Activated CD4-positive, alpha-beta memory T cell treated with anti-CD3 and anti-CD28 coated beads, Interleukin-2, amount 10 ng/mL, durations not matched to agents 7 days and 5 days (primary cell): ENCODE measurements at regions of chr2 and their contacts with region 1.

Region 1: GRCh38 chr2:241762933-241763369 is 13.7 kb upstream of the GAL3ST2 start:
- DNase-seq: peak; percentile 87
- H3K4me3 Mint-ChIP-seq: peak overlapping the region; percentile 45
- H3K27ac Mint-ChIP-seq: peak overlapping the region; percentile 92
- H3K4me1 Mint-ChIP-seq: peaks cover 53% of the 10 kb centered on the region
- H3K27me3 Mint-ChIP-seq: no peaks in the 10 kb centered on the region

Region 2: GRCh38 chr2:241577413-241578122 is 185.4 kb before region 1 on chr2:
- CTCF ChIA-PET with region 1: no interaction called
- POLR2A ChIA-PET with region 1: no interaction called
- DNase-seq: no peak
- H3K4me3 Mint-ChIP-seq: no peak overlapping the region
- H3K27ac Mint-ChIP-seq: no peak overlapping the region
- H3K4me1 Mint-ChIP-seq: no peaks in the 10 kb centered on the region
- H3K27me3 Mint-ChIP-seq: no peaks in the 10 kb centered on the region

Region 3: DNA sequence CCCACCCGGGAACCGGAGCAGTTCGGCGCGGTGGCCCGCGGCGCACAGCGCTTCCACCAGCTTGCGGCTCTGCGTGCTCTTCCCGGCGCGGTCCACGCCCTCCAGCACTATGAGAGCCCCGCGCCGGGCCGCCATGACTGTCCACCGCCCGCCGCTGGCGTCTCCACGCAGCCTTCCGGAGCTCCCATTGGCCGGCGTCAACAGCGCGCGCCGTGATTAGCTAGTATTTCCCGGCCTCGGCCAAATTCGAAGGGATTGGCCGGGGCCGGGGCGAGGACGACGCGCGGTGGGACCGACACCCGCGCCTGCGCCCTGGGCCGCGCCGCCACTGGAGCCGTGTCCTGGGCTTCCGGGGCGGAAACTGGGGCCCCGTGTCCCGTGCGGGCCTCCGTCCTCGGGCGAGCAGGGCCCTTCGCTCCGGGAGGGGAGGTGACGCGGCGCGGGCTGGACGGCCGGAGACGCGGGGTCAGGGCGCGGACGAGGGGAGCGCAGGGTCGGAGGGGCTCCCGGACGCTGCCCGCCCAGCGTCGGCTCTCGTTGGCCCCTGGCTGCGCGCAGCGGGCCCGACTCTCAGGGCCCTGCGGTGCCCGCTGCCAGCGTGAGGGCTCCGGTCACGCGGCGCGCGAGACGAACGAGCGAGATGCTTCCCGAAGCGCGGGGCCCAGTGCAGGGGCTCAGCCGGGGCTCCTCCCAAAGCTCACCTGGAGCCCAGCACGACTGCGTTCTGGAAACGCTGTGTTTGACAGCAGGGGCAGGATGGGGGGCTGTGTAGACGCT is 76.1 kb before region 1 on chr2 and contains the start of gene DTYMK:
- CTCF ChIA-PET with region 1: interaction called, 3 read pairs
- POLR2A ChIA-PET with region 1: interaction called, 10 read pairs
- DNase-seq: peak; percentile 97
- H3K4me3 Mint-ChIP-seq: peak within 1 kb of the TSS; percentile 82
- H3K27ac Mint-ChIP-seq: peak within 1 kb of the TSS; percentile 90
- H3K4me1 Mint-ChIP-seq: peaks cover 40% of the 10 kb centered on the region
- H3K27me3 Mint-ChIP-seq: no peaks in the 10 kb centered on the region
- total RNA-seq, gene DTYMK: 54.8 to 57.7 TPM

Region 4: DNA sequence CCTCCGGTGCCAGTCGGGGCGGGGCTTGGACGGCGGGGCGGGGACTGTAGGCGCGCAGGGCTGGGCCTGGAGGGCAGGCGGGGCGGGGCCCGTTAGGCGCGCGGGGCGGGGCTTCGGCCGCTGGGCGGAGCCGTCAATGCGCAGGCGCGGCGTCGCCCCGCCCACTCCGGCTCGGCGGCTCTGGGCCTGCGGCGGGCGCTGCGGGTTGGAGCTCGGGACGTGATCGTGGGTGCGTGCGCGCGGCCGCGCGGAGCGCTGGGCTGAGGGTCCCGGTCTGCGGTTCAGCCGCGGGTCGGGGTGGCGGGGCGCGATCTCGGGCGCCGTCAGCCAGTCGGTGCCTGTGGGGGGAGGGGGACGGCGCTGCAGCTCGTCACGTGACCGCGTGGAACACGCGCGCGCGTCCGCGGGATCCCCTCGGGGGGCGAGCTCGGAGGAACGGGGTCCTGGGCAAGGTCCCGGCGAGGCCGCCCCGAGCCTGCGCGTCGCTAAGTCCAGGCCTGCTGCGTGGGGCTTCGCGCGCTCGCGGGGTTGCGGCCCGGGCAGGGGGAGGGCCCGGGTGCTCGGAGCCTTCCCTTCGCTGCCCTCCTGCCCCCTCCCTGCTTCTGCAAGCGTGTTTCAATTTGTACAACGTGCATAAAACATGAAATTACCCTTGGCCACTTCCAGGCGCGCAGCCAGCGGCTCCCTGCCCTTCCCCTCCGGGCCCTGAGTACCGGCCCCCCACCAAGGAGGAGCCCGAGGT is 28.3 kb before region 1 on chr2 and contains the start of gene D2HGDH:
- CTCF ChIA-PET with region 1: interaction called, 8 read pairs
- POLR2A ChIA-PET with region 1: interaction called, 41 read pairs
- DNase-seq: peak; percentile 95
- H3K4me3 Mint-ChIP-seq: peak within 1 kb of the TSS; percentile 80
- H3K27ac Mint-ChIP-seq: peak within 1 kb of the TSS; percentile 68
- H3K4me1 Mint-ChIP-seq: peaks cover 61% of the 10 kb centered on the region
- H3K27me3 Mint-ChIP-seq: peaks cover 1% of the 10 kb centered on the region
- total RNA-seq, gene D2HGDH: 24.6 to 25.0 TPM

Region 5: GRCh38 chr2:241741016-241741415 is 21.9 kb before region 1 on chr2:
- CTCF ChIA-PET with region 1: interaction called, 8 read pairs
- POLR2A ChIA-PET with region 1: interaction called, 41 read pairs
- DNase-seq: peak; percentile 61
- H3K4me3 Mint-ChIP-seq: no peak overlapping the region
- H3K27ac Mint-ChIP-seq: peak overlapping the region; percentile 1
- H3K4me1 Mint-ChIP-seq: peaks cover 47% of the 10 kb centered on the region
- H3K27me3 Mint-ChIP-seq: peaks cover 1% of the 10 kb centered on the region

Region 6: GRCh38 chr2:241774646-241775222 is 11.8 kb after region 1 on chr2:
- CTCF ChIA-PET with region 1: no interaction called
- POLR2A ChIA-PET with region 1: interaction called, 21 read pairs
- DNase-seq: peak; percentile 13
- H3K4me3 Mint-ChIP-seq: no peak overlapping the region
- H3K27ac Mint-ChIP-seq: no peak overlapping the region
- H3K4me1 Mint-ChIP-seq: peaks cover 9% of the 10 kb centered on the region
- H3K27me3 Mint-ChIP-seq: no peaks in the 10 kb centered on the region

Region 7: GRCh38 chr2:241844066-241844728 is 81.2 kb after region 1 on chr2:
- CTCF ChIA-PET with region 1: interaction called, 5 read pairs
- POLR2A ChIA-PET with region 1: interaction called, 26 read pairs
- DNase-seq: peak; percentile 87
- H3K4me3 Mint-ChIP-seq: peak overlapping the region; percentile 68
- H3K27ac Mint-ChIP-seq: peak overlapping the region; percentile 63
- H3K4me1 Mint-ChIP-seq: peaks cover 35% of the 10 kb centered on the region
- H3K27me3 Mint-ChIP-seq: peaks cover 36% of the 10 kb centered on the region

Region 8: DNA sequence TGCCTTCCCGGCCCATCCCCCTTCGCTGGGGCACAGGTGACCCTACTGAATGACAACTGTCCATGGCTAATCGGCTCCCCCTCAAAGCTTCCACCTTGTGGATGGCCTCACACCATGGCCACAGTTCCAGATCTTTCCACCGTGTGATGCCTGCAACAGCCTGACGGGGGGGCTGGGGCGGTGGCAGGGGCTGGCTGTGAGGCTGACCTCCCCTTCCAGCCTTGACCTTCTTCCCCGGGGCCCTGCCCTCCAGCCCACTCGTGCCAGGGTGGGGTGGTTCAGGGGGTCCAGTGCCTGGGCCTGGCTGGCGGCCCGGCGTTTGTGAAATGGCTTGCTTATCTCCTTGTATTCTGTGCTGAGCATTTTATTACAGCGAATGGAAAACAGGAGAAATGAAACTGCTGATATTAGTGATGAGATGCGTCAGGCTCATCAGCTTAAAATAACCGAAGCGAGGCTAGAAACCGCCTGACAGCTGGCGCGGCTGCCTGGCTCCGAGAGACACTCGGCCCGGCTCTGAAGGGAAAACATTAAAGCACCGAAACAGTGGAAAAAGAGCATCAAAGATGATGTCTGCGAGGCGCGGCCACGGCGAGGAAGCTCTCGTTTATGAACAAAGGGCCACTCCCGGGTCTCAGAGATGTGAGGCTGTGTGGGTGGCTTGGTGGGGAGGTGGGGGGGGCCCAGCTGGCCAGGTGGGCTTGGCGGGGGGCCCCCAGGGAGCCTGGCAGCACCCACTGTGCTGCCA is 96.7 kb after region 1 on chr2:
- CTCF ChIA-PET with region 1: no interaction called
- POLR2A ChIA-PET with region 1: interaction called, 16 read pairs
- DNase-seq: peak; percentile 63
- H3K4me3 Mint-ChIP-seq: peak overlapping the region; percentile 73
- H3K27ac Mint-ChIP-seq: peak overlapping the region; percentile 92
- H3K4me1 Mint-ChIP-seq: peaks cover 66% of the 10 kb centered on the region
- H3K27me3 Mint-ChIP-seq: peaks cover 6% of the 10 kb centered on the region